IMR-90 (cell line): ENCODE measurements at regions of chr9 and their contacts with region 1.

Region 1: GRCh38 chr9:90651246-90651645 is 8.6 kb upstream of the DIRAS2 start:
- DNase-seq: no peak
- ATAC-seq: no peak
- H3K4me3 ChIP-seq: no peak overlapping the region
- H3K27ac ChIP-seq: no peak overlapping the region
- H3K4me1 ChIP-seq: no peaks in the 10 kb centered on the region
- H3K27me3 ChIP-seq: no peaks in the 10 kb centered on the region
- CTCF ChIP-seq: no peak
- POLR2A ChIP-seq: no peak
- RAD21 ChIP-seq: no peak

Region 2: GRCh38 chr9:90343366-90343765 is 307.9 kb before region 1 on chr9:
- CTCF ChIA-PET with region 1: no interaction called
- POLR2A ChIA-PET with region 1: interaction called, 10 read pairs
- dilution Hi-C with region 1: no loop called
- in situ Hi-C with region 1: no loop called
- intact Hi-C with region 1: no loop called
- DNase-seq: peak; percentile 2
- ATAC-seq: no peak
- H3K4me3 ChIP-seq: no peak overlapping the region
- H3K27ac ChIP-seq: no peak overlapping the region
- H3K4me1 ChIP-seq: no peaks in the 10 kb centered on the region
- H3K27me3 ChIP-seq: no peaks in the 10 kb centered on the region
- CTCF ChIP-seq: no peak
- POLR2A ChIP-seq: no peak
- RAD21 ChIP-seq: no peak